Activated naive CD4-positive, alpha-beta T cell treated with anti-CD3 and anti-CD28 coated beads for 36 hours (primary cell): ENCODE measurements at regions of chr11 and their contacts with region 1.

Region 1: DNA sequence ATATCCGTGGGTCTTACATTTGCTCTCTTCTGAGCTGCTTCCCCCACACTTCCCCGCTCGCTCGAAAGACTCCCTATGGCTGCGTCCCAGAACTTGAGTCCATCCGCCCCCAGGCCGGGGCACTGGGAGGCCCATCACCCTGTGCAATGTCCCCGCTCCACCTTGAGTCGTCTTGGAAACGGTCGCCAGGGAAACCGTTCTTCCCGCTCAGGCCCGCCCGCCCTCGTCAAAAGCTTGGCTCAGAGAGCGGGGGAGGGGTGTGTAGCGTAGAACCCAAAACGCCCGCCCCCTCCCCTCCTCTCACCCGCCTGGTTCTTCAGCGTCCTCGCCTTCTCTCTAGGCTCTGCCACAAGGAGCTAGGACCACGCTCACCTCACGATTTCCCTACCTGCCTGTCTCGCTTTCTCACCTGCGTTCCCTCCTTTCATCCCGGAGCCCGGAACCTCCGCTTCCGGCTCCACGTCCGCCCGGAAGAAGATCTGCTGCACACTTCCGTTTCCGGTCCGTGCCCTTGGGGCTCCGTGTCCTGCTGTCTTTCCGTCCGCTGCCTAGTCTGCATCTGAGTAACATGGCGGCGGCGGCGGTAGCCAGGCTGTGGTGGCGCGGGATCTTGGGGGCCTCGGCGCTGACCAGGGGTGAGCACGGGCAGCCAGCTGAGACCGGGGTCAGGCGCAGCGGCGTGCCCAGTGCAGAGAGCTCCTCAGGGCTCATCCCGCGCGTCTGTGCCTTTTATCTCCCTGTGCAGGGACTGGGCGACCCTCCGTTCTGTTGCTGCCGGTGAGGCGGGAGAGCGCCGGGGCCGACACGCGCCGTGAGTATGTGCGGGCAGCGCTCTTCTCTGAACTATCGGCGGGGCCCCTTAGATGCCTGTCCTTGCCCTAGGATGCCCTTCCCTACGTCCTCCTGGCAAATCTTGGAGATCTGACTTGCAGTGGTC is at the starts of genes KBTBD4 and NDUFS3:
- DNase-seq: peak; percentile 90
- H3K4me3 Mint-ChIP-seq: peak within 1 kb of the TSS; percentile 97
- H3K27ac Mint-ChIP-seq: peak within 1 kb of the TSS; percentile 97
- H3K4me1 Mint-ChIP-seq: peaks cover 44% of the 10 kb centered on the region
- H3K27me3 Mint-ChIP-seq: no peaks in the 10 kb centered on the region
- total RNA-seq, gene KBTBD4: 13.8 to 15.4 TPM
- total RNA-seq, gene NDUFS3: 123 to 124 TPM

Region 2: GRCh38 chr11:47565340-47566148 is 13.2 kb before region 1 on chr11 and contains the start of gene PTPMT1:
- CTCF ChIA-PET with region 1: interaction called, 5 read pairs
- intact Hi-C with region 1: loop called (anchors 1 kb)
- DNase-seq: peak; percentile 82
- H3K4me3 Mint-ChIP-seq: peak within 1 kb of the TSS; percentile 83
- H3K27ac Mint-ChIP-seq: peak within 1 kb of the TSS; percentile 75
- H3K4me1 Mint-ChIP-seq: peaks cover 26% of the 10 kb centered on the region
- H3K27me3 Mint-ChIP-seq: no peaks in the 10 kb centered on the region
- total RNA-seq, gene PTPMT1: 46.9 to 49.2 TPM

Region 3: GRCh38 chr11:47642099-47642855 is 63.5 kb after region 1 on chr11 and contains the start of gene MTCH2:
- CTCF ChIA-PET with region 1: no interaction called
- intact Hi-C with region 1: loop called (anchors 1 kb)
- DNase-seq: peak; percentile 97
- H3K4me3 Mint-ChIP-seq: peak within 1 kb of the TSS; percentile 91
- H3K27ac Mint-ChIP-seq: peak within 1 kb of the TSS; percentile 81
- H3K4me1 Mint-ChIP-seq: peaks cover 19% of the 10 kb centered on the region
- H3K27me3 Mint-ChIP-seq: no peaks in the 10 kb centered on the region
- total RNA-seq, gene MTCH2: 93.7 to 95.1 TPM

Region 4: GRCh38 chr11:47715082-47715669 is 136.4 kb after region 1 on chr11 and contains the start of gene AGBL2:
- CTCF ChIA-PET with region 1: interaction called, 3 read pairs
- intact Hi-C with region 1: loop called (anchors 2 kb)
- DNase-seq: peak; percentile 87
- H3K4me3 Mint-ChIP-seq: peak within 1 kb of the TSS; percentile 91
- H3K27ac Mint-ChIP-seq: peak within 1 kb of the TSS; percentile 94
- H3K4me1 Mint-ChIP-seq: peaks cover 16% of the 10 kb centered on the region
- H3K27me3 Mint-ChIP-seq: no peaks in the 10 kb centered on the region
- total RNA-seq, gene AGBL2: 1.3 to 2.2 TPM

Region 5: GRCh38 chr11:48167380-48167779 is 588.6 kb after region 1 on chr11:
- CTCF ChIA-PET with region 1: no interaction called
- intact Hi-C with region 1: no loop called
- DNase-seq: no peak
- H3K4me3 Mint-ChIP-seq: no peak overlapping the region
- H3K27ac Mint-ChIP-seq: no peak overlapping the region
- H3K4me1 Mint-ChIP-seq: peaks cover 13% of the 10 kb centered on the region
- H3K27me3 Mint-ChIP-seq: no peaks in the 10 kb centered on the region